Posterior vena cava (tissue), 2 donors: ENCODE measurements at regions of chr1 and their contacts with region 1.

Region 1: DNA sequence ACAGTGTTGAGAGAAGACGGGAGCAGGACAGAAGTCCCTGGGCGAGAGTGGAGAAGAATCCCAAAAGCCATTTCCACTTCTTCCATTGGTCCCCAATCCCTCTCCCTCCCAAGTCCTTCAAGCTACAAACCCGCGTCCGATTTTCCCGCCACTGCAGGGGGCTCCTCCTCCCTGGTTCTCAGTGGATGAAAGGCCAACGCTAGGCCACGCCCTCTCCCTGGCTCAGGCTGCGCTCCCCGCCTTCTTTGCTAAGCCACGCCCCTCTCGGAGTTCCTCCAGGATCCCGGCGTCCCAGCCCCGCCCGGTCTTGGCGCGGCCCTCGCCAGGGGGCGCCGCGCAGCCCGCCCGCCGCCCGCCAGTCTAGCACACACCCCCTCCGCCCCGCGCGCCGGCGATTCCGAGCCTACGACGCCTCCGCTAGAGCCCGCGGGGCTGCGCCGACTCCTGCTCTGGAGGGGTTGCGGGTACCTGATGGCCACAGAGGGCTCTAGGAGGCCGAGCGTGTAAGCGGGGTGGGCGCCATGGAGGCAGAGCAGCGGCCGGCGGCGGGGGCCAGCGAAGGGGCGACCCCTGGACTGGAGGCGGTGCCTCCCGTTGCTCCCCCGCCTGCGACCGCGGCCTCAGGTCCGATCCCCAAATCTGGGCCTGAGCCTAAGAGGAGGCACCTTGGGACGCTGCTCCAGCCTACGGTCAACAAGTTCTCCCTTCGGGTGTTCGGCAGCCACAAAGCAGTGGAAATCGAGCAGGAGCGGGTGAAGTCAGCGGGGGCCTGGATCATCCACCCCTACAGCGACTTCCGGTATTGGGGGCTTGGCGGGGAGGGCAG is at the start of gene HCN3:
- DNase-seq: peak; percentile 99
- total RNA-seq, gene HCN3: 1.4 to 1.5 TPM

Region 2: DNA sequence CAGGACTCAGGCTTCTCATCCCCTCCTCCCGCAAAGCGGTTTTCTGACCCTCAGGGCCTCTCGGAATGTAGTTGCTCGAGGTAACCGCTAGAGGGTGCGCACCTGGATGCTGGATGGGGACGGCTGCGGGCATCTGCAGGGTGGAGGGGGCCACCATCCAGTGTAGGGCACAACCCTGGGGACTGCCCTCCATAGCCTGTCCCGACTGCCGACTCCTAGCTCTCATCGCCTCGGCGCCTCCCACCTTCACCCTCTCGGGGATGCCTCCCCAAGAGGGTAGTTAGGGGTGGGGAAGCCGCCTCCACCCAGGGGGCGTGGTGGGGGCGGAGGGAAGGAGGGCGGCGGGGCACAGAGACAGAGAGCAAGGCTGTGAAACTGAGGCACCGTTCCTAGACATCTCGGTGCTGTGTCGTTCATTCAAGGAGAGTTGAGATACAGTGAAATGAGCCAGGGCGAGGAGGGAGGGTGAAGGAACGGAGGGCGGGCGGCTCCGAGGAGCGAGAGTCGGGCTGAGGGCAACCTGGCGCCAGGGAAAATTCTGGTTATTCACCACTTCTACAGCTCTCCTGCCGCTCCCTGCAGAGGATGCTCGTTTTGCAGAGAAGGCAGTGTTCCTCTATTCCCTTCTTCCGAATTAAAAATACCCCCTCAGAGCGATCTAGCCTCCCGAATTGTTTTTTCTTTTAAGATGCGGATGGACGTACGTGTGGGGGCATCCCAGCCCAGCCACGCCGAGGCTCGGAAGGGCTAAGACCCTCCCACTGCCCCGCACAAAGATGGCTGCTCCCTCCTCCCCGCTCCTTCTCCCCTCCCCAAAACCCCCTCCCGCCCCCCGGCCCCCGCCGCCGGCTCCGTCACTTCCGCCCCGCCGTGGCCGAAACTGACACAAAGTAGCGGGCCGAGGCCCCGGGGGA is 952.4 kb before region 1 on chr1 and contains the start of gene ATP8B2:
- intact Hi-C with region 1: no loop called
- DNase-seq: peak; percentile 90
- total RNA-seq, gene ATP8B2: 130 to 153 TPM

Region 3: DNA sequence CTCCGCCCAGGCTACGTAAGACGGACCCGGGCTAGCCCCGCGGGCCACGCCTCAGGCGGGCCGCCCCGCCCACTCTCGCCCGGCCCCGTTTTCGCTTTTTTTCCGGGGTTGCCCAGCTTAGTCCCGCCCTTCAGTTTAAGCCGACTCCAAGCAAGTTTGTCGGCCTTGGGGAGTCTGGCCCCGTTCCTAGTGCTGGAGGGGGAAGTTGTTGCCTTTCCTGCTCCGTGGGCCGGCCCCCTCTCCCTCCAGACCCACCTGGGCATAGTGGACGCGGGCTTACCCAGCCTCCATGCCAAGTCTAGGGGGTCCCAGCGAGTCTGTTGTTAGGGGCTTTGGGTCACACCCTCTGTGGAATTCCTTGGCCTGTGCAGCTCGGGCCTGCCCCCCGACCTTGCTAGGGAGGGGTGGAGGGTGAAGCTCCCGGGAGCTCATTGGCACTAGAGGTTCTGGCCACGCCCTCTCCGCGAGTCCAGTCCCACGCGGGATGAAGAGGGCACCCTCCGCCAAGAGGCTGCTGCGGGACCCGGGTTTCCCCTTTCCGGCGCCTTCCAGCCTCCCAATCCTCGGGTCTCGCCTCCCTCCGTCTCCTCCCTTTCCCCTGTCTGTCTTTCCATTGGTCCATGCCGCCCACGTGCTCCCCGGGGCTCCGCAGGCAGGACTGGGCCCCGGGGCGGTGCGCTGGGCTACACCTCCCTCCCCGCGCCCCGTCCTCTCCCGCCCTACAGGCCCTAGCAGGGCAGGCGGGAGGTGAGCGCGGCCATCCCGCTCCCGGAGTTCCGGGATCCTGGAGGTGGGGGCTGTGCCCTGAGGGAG is 46.7 kb after region 1 on chr1:
- intact Hi-C with region 1: loop called (anchors 5 kb)
- DNase-seq: peak; percentile 98